Upper lobe of right lung (tissue), 1 donor: ENCODE measurements at regions of chr22 and their contacts with region 1.

Region 1: GRCh38 chr22:19619144-19620009 is 94.9 kb upstream of the SEPTIN5 start:
- DNase-seq: no peak
- ATAC-seq: no peak
- H3K4me3 ChIP-seq: no peak overlapping the region
- H3K27ac ChIP-seq: no peak overlapping the region
- H3K4me1 ChIP-seq: peaks cover 13% of the 10 kb centered on the region
- H3K27me3 ChIP-seq: no peaks in the 10 kb centered on the region
- CTCF ChIP-seq: no peak

Region 2: GRCh38 chr22:19368876-19369275 is 250.5 kb before region 1 on chr22:
- intact Hi-C with region 1: no loop called
- DNase-seq: peak; percentile 34
- ATAC-seq: peak; percentile 20
- H3K4me3 ChIP-seq: no peak overlapping the region
- H3K27ac ChIP-seq: no peak overlapping the region
- H3K4me1 ChIP-seq: no peaks in the 10 kb centered on the region
- H3K27me3 ChIP-seq: no peaks in the 10 kb centered on the region
- CTCF ChIP-seq: no peak

Region 3: GRCh38 chr22:19523240-19524169 is 95.9 kb before region 1 on chr22:
- intact Hi-C with region 1: loop called (anchors 10 kb)
- DNase-seq: no peak
- ATAC-seq: no peak
- H3K4me3 ChIP-seq: peak overlapping the region; percentile 49
- H3K27ac ChIP-seq: peak overlapping the region; percentile 78
- H3K4me1 ChIP-seq: peaks cover 5% of the 10 kb centered on the region
- H3K27me3 ChIP-seq: peaks cover 39% of the 10 kb centered on the region
- CTCF ChIP-seq: no peak

Region 4: DNA sequence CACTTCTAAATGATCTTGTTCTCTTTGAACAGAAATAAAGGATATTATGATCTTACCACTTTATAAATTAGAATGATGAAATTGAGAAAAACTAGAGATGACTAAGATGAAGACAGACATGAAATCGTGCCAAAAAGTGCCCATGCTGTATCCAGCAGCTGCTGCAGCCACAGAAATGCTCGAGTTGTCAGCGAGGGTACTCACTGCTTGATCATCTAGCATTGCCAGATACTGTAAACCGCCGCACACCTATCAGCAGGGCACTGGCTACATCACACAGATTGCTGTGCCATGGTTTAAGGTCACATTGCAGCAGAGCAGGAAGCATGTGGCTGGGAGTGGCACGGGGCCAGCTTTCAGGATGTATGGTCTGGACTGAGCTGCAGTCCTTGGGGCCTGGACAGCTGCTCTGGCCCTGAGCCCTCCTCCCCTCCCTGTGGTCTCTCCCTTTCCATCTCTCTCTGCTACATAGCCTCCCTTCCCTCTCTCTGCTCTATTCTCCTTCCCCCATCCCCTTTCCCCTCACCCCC is 44.0 kb after region 1 on chr22:
- intact Hi-C with region 1: no loop called
- DNase-seq: no peak
- ATAC-seq: peak; percentile 49
- H3K4me3 ChIP-seq: no peak overlapping the region
- H3K27ac ChIP-seq: no peak overlapping the region
- H3K4me1 ChIP-seq: no peaks in the 10 kb centered on the region
- H3K27me3 ChIP-seq: peaks cover 8% of the 10 kb centered on the region
- CTCF ChIP-seq: no peak